ENCODE measurements at regions of chr11 and their contacts with region 1.

Region 1: GRCh38 chr11:32006799-32007388 is 84.0 kb upstream of the RCN1 start:
- DNase-seq: peak; percentile 53
- H3K4me3 Mint-ChIP-seq: no peak overlapping the region
- H3K27ac Mint-ChIP-seq: no peak overlapping the region
- H3K4me1 Mint-ChIP-seq: no peaks in the 10 kb centered on the region
- H3K27me3 Mint-ChIP-seq: peaks cover 41% of the 10 kb centered on the region
- CTCF ChIP-seq: peak; percentile 60

Region 2: DNA sequence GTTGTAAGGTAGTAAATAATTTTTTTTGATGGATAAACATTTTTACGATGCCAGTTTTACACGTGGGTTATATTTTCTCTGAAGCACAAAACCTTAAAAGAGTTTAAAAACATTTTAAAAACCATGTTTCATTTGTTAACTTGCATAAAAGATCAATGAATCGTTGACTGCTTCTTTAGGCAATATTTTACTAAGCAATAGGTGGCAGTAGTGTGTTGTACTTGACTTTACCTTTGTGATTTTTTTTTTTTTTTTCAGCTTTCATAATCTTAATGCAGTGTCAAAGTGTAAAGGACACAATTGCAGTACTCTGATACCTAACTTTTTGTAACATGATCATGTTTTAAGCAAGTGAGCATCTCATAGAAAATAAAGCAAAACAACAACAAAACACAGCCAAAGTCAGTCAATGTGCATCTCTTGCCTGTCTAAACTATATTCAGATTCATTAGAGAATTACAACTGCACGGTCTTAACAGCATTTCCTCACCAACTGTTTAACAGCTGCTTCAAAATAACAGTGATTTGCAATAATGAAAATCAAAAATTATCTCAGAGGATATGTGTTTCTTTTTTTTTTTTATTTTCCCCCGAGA is 609.6 kb before region 1 on chr11:
- CTCF ChIA-PET with region 1: interaction called, 19 read pairs
- POLR2A ChIA-PET with region 1: no interaction called
- intact Hi-C with region 1: loop called (anchors 2 kb)
- DNase-seq: peak; percentile 31
- H3K4me3 Mint-ChIP-seq: no peak overlapping the region
- H3K27ac Mint-ChIP-seq: no peak overlapping the region
- H3K4me1 Mint-ChIP-seq: no peaks in the 10 kb centered on the region
- H3K27me3 Mint-ChIP-seq: no peaks in the 10 kb centered on the region
- CTCF ChIP-seq: peak; percentile 54

Region 3: DNA sequence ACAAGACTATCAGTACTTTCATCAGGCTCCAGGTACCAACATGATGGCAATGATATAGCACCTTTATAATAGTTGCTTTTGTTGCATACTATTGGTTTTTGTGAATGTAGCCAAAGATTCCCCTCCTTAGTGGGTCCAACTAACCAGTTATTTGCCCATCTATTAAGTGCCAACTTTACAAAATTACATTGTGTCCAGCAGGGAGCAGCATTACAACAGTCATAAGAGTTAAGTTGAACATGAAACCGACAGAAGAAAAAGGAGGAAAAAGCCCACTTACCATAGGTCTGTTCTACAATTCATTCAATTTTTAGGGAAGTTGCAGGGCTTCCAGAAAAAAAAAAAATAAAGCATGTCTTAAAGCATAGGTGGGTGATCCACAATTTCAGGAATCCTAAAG is 519.0 kb before region 1 on chr11:
- CTCF ChIA-PET with region 1: interaction called, 6 read pairs
- POLR2A ChIA-PET with region 1: no interaction called
- intact Hi-C with region 1: loop called (anchors 1 kb)
- DNase-seq: peak; percentile 52
- H3K4me3 Mint-ChIP-seq: no peak overlapping the region
- H3K27ac Mint-ChIP-seq: no peak overlapping the region
- H3K4me1 Mint-ChIP-seq: peaks cover 11% of the 10 kb centered on the region
- H3K27me3 Mint-ChIP-seq: no peaks in the 10 kb centered on the region
- CTCF ChIP-seq: peak; percentile 43

Measured in MCF 10A (cell line).